MCF 10A (cell line): ENCODE measurements at regions of chr1 and their contacts with region 1.

Region 1: GRCh38 chr1:234997201-234997895 is 131.3 kb downstream of the TOMM20 start:
- DNase-seq: peak; percentile 100
- H3K4me3 Mint-ChIP-seq: peak overlapping the region; percentile 58
- H3K27ac Mint-ChIP-seq: peak overlapping the region; percentile 93
- H3K4me1 Mint-ChIP-seq: peaks cover 26% of the 10 kb centered on the region
- H3K27me3 Mint-ChIP-seq: no peaks in the 10 kb centered on the region
- CTCF ChIP-seq: no peak

Region 2: GRCh38 chr1:234599617-234600417 is 397.5 kb before region 1 on chr1:
- CTCF ChIA-PET with region 1: no interaction called
- POLR2A ChIA-PET with region 1: interaction called, 56 read pairs
- intact Hi-C with region 1: no loop called
- DNase-seq: peak; percentile 93
- H3K4me3 Mint-ChIP-seq: peak overlapping the region; percentile 80
- H3K27ac Mint-ChIP-seq: peak overlapping the region; percentile 90
- H3K4me1 Mint-ChIP-seq: peaks cover 41% of the 10 kb centered on the region
- H3K27me3 Mint-ChIP-seq: no peaks in the 10 kb centered on the region
- CTCF ChIP-seq: no peak

Region 3: DNA sequence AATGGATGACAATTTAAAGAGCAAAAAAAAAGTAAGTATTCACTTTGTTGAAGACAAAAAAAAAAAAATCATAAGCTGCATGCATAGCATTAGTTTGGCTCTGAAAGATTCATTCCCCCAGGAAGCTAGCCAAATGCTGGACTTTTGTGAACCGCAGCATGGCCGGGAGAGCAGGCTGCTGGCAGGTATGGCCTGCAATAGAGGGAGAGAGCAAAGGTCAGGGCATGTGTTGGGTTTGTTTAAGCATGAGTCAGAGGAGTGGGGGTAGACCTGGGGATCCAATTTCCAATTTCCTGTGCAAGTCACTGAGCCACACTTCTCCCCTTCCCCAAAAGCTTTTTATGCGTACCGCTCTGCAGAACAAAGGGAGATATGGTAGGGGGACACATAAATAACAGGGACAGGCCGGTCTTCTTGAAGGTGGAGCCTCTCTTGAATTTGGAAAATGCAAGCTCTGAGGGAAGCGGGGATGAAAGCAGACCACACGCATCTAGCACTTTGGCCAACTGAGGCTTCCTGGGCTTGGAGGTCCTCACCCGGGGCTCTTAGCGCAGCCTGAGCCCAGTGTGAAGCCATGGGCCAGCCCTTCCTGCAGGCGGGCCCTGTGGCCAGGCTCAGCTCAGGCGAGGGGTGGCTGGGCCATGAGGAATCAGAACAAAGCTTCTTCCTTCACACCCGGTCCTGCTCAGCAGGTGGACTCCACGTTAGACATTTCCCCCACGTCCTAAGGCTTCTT is 39.9 kb before region 1 on chr1:
- CTCF ChIA-PET with region 1: interaction called, 3 read pairs
- POLR2A ChIA-PET with region 1: interaction called, 13 read pairs
- intact Hi-C with region 1: loop called (anchors 2 kb)
- DNase-seq: peak; percentile 96
- H3K4me3 Mint-ChIP-seq: no peak overlapping the region
- H3K27ac Mint-ChIP-seq: peak overlapping the region; percentile 30
- H3K4me1 Mint-ChIP-seq: peaks cover 25% of the 10 kb centered on the region
- H3K27me3 Mint-ChIP-seq: no peaks in the 10 kb centered on the region
- CTCF ChIP-seq: no peak

Region 4: DNA sequence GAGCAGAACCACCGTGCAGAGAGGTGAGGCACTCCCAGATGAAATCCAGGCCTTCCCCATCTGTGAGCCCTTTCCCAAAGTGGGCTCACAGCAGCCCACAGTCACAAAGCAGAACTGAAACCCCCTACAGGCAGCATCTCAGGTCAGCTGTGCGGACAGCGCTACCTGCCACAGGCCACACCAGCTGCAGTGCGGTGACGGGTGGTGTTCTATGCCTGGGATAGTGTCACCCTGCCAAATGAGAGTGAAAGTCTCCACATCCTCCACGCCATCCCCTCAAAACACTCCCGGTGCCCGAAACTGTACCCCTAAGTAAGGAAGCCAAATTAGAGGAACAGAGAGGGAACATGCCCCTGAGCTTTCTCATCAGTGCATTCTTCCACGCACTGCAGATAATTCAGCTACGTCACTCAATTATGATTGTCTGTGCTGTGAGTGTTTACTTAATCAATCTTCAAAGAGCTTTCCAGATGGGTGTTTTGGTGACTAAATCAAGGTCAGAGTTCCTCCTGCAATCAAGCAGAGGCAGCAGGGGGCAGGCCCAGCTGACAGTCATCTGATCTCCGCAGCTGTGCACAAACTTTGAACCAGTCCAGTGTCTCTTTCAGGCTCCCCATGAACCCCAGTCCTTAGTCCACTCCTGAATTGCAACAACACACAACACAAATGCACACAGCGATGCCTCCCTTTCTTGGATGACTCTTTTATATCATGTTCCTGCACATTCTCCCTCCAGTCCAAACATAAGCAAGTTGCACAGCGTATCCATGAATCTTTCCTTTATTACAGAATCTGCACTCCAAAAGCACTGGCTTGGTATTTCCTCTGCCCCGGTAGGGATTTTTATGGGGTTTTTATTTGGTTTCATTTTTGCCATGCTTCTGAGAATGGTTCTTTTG is 18.7 kb before region 1 on chr1:
- CTCF ChIA-PET with region 1: interaction called, 4 read pairs
- POLR2A ChIA-PET with region 1: interaction called, 30 read pairs
- intact Hi-C with region 1: loop called (anchors 1 kb)
- DNase-seq: peak; percentile 68
- H3K4me3 Mint-ChIP-seq: peak overlapping the region; percentile 20
- H3K27ac Mint-ChIP-seq: peak overlapping the region; percentile 96
- H3K4me1 Mint-ChIP-seq: peaks cover 50% of the 10 kb centered on the region
- H3K27me3 Mint-ChIP-seq: no peaks in the 10 kb centered on the region
- CTCF ChIP-seq: no peak

Region 5: DNA sequence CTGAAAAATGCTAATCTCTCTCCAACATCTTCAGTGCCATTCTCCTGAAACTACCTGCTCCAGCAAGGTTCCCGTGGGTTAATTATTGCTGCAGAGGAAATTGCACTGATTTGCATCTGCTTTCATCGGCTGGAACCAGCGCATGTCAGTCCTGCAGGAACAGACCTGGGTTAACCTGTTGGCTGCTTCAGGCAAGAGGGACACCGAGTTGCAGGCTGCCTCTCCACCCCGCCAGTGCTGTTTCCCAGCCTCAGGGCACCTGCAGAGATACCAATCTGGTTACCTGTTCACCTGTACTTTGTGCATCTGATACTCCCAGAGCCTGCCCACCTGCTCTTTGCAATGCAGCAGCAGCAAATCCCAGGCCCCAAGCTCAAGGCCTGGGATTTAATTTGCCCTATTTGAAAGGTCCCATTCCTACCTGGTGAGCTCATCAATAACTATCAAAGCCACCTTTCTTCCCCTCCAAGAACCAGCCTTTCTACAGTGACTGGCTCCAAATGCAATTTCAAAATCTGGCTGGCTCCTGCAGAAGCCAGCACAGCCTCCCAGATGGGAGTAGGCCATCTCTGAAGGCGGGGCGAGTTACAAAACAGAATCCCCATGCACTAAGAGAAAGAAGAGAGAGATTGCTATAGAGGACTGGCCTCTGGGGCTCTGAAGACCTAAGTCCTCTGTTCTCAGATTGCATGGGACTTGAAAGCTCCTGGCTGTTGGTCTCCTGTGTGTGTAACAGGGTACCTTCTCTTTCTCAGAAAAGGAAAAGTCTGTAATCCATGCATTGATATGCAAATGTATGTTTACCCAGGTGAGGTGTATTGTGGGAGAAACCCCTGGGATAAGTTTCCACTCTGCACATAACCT is 63.5 kb after region 1 on chr1:
- CTCF ChIA-PET with region 1: interaction called, 7 read pairs
- POLR2A ChIA-PET with region 1: interaction called, 59 read pairs
- intact Hi-C with region 1: loop called (anchors 1 kb)
- DNase-seq: peak; percentile 76
- H3K4me3 Mint-ChIP-seq: no peak overlapping the region
- H3K27ac Mint-ChIP-seq: no peak overlapping the region
- H3K4me1 Mint-ChIP-seq: peaks cover 38% of the 10 kb centered on the region
- H3K27me3 Mint-ChIP-seq: no peaks in the 10 kb centered on the region
- CTCF ChIP-seq: no peak

Region 6: DNA sequence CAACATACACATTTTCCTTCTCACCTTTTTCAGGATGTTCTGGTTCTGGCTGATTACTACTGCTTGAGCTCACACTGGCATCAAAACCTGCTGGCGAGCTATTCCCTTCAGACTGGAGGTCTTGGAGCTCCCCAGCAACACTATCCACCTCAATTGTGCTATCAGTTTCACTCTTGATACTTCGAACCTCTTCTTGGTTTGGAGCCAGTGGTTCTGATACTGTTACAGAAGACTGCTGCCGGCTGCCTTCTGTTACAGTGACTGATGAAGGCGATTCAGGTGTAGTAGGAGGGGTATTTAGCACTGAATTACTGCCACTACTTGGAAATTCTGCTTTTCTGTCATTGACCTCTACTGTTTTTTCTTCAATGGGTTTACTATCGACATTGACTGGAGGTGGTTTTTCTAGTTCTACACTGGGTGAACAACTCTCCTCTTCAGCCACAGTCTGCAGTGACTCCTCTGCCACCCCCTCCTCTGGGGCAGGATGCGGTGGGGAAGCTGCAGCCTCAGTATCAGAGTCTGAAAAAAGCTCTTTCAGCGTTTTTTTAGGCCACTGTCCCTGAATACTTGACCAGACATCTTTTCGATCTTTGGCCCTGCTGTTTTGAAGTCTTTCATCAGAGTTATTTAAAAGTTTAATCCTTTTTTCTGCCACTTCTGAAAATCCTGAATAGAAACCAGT is 184.4 kb after region 1 on chr1:
- CTCF ChIA-PET with region 1: no interaction called
- POLR2A ChIA-PET with region 1: no interaction called
- intact Hi-C with region 1: no loop called
- DNase-seq: no peak
- H3K4me3 Mint-ChIP-seq: no peak overlapping the region
- H3K27ac Mint-ChIP-seq: no peak overlapping the region
- H3K4me1 Mint-ChIP-seq: no peaks in the 10 kb centered on the region
- H3K27me3 Mint-ChIP-seq: no peaks in the 10 kb centered on the region
- CTCF ChIP-seq: no peak